ENCODE measurements at regions of chr10 and their contacts with region 1.

Region 1: DNA sequence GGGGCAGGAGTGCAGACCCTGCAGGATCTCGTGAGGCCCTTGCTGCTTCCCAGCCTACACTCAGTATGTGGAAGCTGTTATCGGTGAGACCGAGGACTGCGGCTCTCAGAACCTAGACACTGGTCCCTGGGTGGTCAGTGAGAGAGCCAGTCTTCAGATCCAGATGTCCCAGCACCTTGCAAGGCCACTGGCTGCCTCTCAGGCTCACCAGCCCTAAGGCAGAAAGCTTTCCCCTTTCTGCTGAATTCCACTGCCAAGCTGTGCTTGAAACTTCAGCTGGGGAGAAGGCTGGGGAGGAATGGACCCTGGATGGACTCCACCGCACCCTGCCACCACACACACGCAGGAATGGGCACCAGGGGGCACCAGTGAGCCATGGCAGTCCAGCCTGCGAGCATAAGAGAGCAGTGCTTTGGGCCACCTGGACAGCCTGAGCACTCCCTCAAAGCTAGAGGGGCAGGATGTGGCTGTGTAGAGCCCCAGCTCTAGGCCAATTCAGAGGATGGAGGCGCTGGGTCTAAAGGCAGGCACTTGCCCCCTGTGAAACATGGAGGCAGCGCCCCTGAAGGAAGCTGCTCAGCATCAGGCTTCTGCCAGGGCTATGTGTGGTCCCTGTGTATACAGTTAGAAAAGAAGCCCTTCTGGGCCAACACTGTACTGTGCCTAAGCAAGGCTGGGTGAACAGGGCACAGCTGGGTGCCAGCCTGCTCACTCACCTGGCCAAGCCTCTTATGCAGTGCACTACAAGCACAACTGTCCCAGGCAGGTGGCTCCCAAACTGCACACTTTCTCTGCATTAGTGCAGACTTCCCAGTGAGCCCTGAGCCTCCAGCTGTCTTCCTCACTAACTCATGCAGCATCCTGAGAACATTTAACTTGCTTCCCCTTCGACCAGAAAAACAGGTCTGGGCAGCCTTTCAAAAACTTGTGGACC is 21.6 kb downstream of the TMEM72 start:
- DNase-seq: peak; percentile 96
- ATAC-seq: peak; percentile 96
- H3K4me3 ChIP-seq: no peak overlapping the region
- H3K27ac ChIP-seq: no peak overlapping the region
- H3K4me1 ChIP-seq: peaks cover 13% of the 10 kb centered on the region
- H3K27me3 ChIP-seq: no peaks in the 10 kb centered on the region
- CTCF ChIP-seq: peak; percentile 97

Region 2: GRCh38 chr10:44809652-44810051 is 123.1 kb before region 1 on chr10:
- intact Hi-C with region 1: no loop called
- DNase-seq: no peak
- ATAC-seq: no peak
- H3K4me3 ChIP-seq: no peak overlapping the region
- H3K27ac ChIP-seq: no peak overlapping the region
- H3K4me1 ChIP-seq: no peaks in the 10 kb centered on the region
- H3K27me3 ChIP-seq: peaks cover 4% of the 10 kb centered on the region
- CTCF ChIP-seq: no peak

Region 3: DNA sequence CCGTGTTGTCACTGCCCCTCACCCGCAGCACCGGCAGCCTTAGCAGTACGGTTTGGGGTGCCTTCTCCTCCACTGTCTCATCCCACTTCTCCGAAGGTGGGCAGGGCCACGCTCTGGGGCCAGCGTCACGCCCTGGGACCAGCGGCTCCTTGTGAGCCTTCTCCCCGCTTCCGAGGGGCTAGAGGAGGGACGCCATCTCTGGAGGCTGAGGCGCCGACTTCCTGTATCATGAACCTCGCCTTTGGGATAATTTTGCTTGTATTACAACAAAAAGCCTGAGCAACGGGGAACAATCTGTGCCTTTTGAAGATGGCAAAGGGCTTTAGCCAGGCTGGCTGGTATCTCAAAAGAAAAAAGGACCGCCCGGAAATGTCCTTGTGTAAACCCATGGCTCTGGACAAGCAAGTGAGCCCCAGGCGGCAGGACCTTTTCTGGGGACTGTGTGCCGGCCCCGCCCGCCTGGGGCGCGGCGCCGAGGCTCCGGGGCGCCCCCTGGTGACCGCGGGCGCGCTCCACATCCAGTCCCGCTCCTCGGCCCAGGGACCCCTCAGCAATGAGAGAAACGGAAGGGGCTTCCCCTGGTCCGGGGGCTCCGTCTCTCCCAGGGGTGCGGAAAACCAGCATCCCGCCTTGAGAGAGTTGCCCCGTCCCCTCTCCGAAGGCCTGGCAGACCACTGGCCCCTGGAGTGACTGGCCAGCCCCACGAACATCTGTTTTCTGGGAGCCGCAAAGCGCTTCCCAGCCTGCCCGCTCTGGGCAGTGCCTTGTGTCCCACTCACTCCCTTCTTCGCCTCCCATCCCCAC is 42.0 kb after region 1 on chr10:
- intact Hi-C with region 1: loop called (anchors 5 kb)
- DNase-seq: peak; percentile 86
- ATAC-seq: peak; percentile 85
- H3K4me3 ChIP-seq: peak overlapping the region; percentile 73
- H3K27ac ChIP-seq: peak overlapping the region; percentile 81
- H3K4me1 ChIP-seq: peaks cover 46% of the 10 kb centered on the region
- H3K27me3 ChIP-seq: no peaks in the 10 kb centered on the region
- CTCF ChIP-seq: peak; percentile 99

Measured in upper lobe of right lung (tissue), 1 donor.